ENCODE measurements at regions of chr7 and their contacts with region 1.

Region 1: GRCh38 chr7:151172273-151173141 is 5.0 kb upstream of the GBX1 start:
- DNase-seq: peak; percentile 82 to 87 (median 82)
- ATAC-seq: peak; percentile 98
- H3K4me3 ChIP-seq: no peak overlapping the region
- H3K4me1 ChIP-seq: peaks cover 10% of the 10 kb centered on the region
- CTCF ChIP-seq: peak; percentile 100

Region 2: GRCh38 chr7:151068068-151068773 is 104.3 kb before region 1 on chr7:
- intact Hi-C with region 1: no loop called
- DNase-seq: no peak
- ATAC-seq: no peak
- H3K4me3 ChIP-seq: no peak overlapping the region
- H3K4me1 ChIP-seq: no peaks in the 10 kb centered on the region
- CTCF ChIP-seq: no peak

Region 3: DNA sequence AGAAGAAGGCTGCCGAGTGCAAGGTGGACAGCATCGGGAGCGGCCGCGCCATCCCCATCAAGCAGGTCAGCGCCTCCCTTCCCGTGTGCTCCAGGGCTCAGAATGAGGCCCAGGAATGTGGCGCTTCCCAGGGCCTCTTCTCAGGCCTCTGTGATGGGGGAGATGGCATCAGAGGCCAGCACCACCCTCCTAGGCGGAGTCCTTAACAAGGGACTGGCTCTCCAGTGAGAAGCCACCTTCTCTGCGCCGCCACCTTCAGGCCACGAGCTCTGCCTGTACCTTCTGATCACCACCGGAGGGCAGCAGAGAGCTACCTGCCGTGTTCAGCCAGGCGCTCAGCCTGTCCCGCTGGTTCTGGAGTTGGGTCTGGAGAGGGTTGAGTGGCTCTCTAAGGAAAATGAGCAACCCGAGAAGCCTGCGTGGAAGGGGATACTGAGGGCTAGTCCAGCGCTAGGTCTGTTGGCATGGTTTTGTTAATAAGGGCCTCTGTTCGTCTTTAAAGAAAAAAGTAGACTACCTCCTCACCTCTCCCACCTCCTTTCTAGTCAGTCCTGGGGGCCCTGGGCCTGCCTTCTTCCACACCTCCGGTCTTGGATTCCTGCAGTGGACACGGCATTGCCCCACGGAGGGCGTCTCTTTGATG is 48.6 kb before region 1 on chr7:
- intact Hi-C with region 1: loop called (anchors 5 kb)
- DNase-seq: peak; percentile 80 to 89 (median 84)
- ATAC-seq: peak; percentile 73
- H3K4me3 ChIP-seq: no peak overlapping the region
- H3K4me1 ChIP-seq: peaks cover 12% of the 10 kb centered on the region
- CTCF ChIP-seq: peak; percentile 93

Region 4: GRCh38 chr7:151304856-151305255 is 132.3 kb after region 1 on chr7:
- intact Hi-C with region 1: loop called in 1 of 2 experiments (anchors 10 kb)
- DNase-seq: no peak
- ATAC-seq: no peak
- H3K4me3 ChIP-seq: no peak overlapping the region
- H3K4me1 ChIP-seq: peaks cover 8% of the 10 kb centered on the region
- CTCF ChIP-seq: no peak